Left lung (tissue), 14 donors: ENCODE measurements at regions of chr7 and their contacts with region 1.

Region 1: GRCh38 chr7:4681886-4682620 is at the start of gene FOXK1:
- DNase-seq: peak; percentile 76 to 93 (median 82)
- ATAC-seq: peak; percentile 88
- H3K4me3 ChIP-seq: peak within 1 kb of the TSS; percentile 85 to 87
- H3K27ac ChIP-seq: peak within 1 kb of the TSS; percentile 86 to 93
- H3K4me1 ChIP-seq: peaks cover 7 to 39% of the 10 kb centered on the region in 2 donors
- H3K27me3 ChIP-seq: no peaks in the 10 kb centered on the region
- CTCF ChIP-seq: no peak
- polyA plus RNA-seq, gene FOXK1: 15.1 to 26.6 (median 17.5) TPM

Region 2: DNA sequence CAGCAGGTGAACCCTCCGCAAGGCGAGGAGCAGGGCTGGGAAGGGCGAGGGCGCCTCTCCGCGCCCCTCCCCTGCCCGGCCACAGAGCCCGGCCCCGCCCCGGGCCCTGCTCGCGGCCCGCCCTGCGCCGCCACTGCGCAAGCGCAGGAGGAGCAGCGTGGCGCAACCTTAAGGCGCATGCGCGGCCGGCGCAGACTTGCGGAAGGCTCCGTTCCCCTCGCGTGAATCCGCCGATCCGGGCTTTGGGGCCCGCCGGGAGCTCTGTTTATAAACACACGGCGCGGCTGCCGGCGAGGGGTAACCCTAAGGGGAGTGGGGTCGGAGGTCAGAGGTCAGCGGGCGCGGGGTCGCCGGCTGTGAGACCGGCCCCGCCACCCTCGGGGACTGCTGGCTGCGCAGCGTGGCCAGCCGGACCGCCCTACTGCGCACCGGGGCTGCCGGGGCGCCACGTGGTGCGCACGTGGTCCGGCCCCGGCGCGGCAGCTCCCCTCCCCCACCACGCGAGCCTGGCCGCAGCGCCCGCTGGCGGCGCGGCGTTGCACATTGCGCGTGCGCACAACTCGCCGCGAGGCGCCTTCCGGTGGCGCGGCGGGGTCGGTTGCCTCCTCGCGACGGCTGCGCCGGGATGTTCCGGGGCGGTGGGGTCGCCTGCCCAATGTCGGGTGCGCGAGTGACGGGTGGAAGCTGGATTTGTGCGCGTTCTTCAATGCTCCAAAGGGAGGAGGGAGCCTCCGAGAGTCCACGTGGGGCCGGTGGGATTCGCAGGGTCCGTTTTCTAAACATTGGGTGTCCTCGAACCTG is 40.2 kb before region 1 on chr7:
- intact Hi-C with region 1: loop called in 1 of 2 experiments (anchors 5 kb)
- DNase-seq: peak; percentile 93 to 98 (median 98)
- ATAC-seq: peak; percentile 97
- H3K4me3 ChIP-seq: peak overlapping the region; percentile 64
- H3K27ac ChIP-seq: peak overlapping the region; percentile 85 to 92
- H3K4me1 ChIP-seq: peaks cover 6 to 13% of the 10 kb centered on the region in 2 donors
- H3K27me3 ChIP-seq: no peaks in the 10 kb centered on the region
- CTCF ChIP-seq: peak in 1 of 2 donors; percentile 29

Region 3: DNA sequence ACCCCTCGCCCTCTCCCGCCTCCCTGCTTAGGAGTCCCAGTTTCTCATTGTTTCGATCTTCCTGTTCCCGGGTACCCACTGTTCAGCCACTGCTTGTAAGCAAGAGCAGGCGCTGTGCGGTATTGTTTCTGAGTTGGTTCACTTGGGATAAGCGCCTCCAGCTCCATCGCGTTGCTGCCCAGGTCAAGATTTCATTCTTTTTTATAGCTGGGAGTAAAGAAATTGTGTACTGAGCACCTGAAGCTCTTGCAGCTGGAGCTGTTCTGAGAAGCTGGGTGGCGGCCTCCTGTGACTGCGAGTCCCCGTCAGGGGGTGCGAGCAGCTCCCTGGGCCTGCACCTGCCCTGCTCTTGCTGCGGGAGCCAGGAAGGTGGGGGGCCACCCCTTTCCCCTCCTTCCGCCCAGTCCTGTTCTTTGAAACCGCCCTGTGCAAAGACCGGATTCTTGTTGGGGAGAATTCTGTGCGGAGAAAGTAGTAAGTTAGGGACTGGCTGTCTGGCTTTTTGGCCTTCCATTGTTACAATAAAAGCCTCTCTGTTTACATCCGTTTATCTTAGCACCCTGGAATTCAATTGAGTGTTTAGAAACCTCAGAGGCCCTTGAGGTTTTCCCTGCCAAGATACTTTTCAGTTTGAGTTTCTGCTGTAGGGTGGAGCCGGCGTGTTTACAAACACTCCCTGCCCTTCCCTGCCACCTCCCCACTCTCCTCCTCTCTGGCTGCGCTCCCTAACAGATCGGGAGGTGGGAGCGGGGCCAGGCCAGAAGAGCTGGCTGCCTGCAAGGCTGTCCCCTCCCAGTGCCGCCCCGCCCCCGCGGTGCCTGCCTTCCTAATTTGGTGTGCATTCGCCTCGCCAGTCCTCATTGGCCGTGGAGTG is 62.6 kb after region 1 on chr7:
- intact Hi-C with region 1: loop called in 1 of 2 experiments (anchors 10 kb)
- DNase-seq: peak; percentile 99 to 100 (median 99)
- ATAC-seq: peak; percentile 90
- H3K4me3 ChIP-seq: peak overlapping the region in 1 of 2 donors; percentile 39
- H3K27ac ChIP-seq: peak overlapping the region; percentile 91 to 93
- H3K4me1 ChIP-seq: peaks cover 36 to 73% of the 10 kb centered on the region in 2 donors
- H3K27me3 ChIP-seq: no peaks in the 10 kb centered on the region
- CTCF ChIP-seq: no peak

Region 4: DNA sequence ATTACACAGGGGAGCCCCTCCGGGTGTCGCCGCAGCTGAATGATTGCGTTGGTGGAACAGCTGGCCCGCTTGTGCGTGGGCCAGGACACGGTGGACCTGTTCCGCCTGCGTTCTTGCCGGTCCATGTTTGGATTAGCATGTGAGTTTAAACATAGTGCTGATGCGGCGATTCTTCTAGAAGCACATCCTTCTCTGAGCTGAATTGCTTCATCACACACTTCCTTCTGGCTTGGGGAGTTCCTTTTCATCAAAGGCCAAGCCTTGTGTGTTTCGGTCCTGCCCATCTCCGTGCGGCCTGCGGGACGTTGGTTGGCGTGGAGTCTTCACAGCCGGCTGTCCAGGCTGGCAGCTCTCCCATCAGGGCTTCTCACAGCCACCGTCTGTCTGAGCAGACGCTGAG is 555.2 kb after region 1 on chr7:
- intact Hi-C with region 1: no loop called
- DNase-seq: peak; percentile 62 to 90 (median 79)
- ATAC-seq: peak; percentile 16
- H3K4me3 ChIP-seq: no peak overlapping the region
- H3K27ac ChIP-seq: peak overlapping the region; percentile 65 to 74
- H3K4me1 ChIP-seq: peaks cover 6 to 35% of the 10 kb centered on the region in 2 donors
- H3K27me3 ChIP-seq: peaks cover 0 to 11% of the 10 kb centered on the region in 2 donors
- CTCF ChIP-seq: no peak